PC-9 (cell line): ENCODE measurements at regions of chr2 and their contacts with region 1.

Region 1: GRCh38 chr2:102005989-102006885 is 14.5 kb downstream of the IL1R2 start:
- DNase-seq: no peak
- H3K4me3 ChIP-seq: no peak overlapping the region
- H3K27ac ChIP-seq: no peak overlapping the region
- H3K4me1 ChIP-seq: peaks cover 12% of the 10 kb centered on the region
- H3K27me3 ChIP-seq: no peaks in the 10 kb centered on the region
- CTCF ChIP-seq: peak; percentile 73

Region 2: GRCh38 chr2:102083393-102083703 is 77.1 kb after region 1 on chr2:
- CTCF ChIA-PET with region 1: interaction called, 13 read pairs
- POLR2A ChIA-PET with region 1: no interaction called
- intact Hi-C with region 1: no loop called
- DNase-seq: no peak
- H3K4me3 ChIP-seq: no peak overlapping the region
- H3K27ac ChIP-seq: peak overlapping the region; percentile 43; the same call in 1 of the 2 replicates
- H3K4me1 ChIP-seq: peaks cover 21% of the 10 kb centered on the region
- H3K27me3 ChIP-seq: no peaks in the 10 kb centered on the region
- CTCF ChIP-seq: no peak

Region 3: DNA sequence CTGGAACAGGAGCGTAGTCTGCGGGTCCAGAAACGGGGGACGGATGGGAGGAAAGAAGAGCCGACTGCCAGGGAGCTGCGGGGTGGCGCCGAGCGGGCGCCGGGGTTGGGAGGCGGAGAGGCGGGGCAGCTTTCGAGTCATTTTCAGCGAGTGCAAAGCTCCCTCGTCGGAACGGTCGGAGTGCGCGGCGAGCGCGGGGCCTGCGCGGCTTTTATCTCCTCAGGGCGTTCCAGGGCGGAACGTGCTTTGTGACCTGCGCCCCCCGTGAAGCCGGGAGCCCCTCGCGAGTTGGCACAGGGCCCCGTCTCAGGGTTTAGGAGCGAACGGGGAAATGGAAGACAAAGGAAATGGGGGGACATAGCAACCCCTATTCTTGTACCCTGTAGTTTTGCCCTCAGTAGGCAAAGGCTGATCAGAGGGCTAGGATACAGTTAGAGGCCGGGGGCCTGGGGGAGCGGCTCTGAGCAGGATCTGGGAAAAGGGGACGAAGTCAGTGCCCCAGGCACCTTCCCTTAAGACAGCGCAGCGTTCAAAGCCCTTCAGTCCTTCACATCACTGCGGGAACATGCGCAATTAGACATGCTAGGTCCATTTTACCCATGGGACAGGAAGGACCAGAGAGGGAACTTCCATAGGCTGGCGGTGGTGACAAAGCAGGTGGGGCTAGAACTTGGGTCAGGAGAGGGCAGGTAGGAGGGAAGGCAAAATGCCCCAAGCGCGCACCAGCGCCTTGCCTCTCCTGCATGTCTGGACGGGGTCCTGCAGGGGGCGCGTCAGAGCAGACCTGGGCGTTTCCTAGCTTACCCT is 245.0 kb after region 1 on chr2:
- CTCF ChIA-PET with region 1: no interaction called
- POLR2A ChIA-PET with region 1: no interaction called
- intact Hi-C with region 1: no loop called
- DNase-seq: peak in 1 of 2 experiments; percentile 69
- H3K4me3 ChIP-seq: peak overlapping the region; percentile 6; the same call in 1 of the 2 replicates
- H3K27ac ChIP-seq: no peak overlapping the region
- H3K4me1 ChIP-seq: peaks cover 9% of the 10 kb centered on the region
- H3K27me3 ChIP-seq: no peaks in the 10 kb centered on the region
- CTCF ChIP-seq: peak; percentile 48

Region 4: GRCh38 chr2:102498414-102498813 is 492.2 kb after region 1 on chr2:
- CTCF ChIA-PET with region 1: no interaction called
- POLR2A ChIA-PET with region 1: no interaction called
- intact Hi-C with region 1: no loop called
- DNase-seq: no peak
- H3K4me3 ChIP-seq: no peak overlapping the region
- H3K27ac ChIP-seq: no peak overlapping the region
- H3K4me1 ChIP-seq: no peaks in the 10 kb centered on the region
- H3K27me3 ChIP-seq: no peaks in the 10 kb centered on the region
- CTCF ChIP-seq: no peak